GM10248 (cell line): ENCODE measurements at regions of chr3 and their contacts with region 1.

Region 1: GRCh38 chr3:99833617-99834205 is 16.0 kb downstream of the CMSS1 start:
- DNase-seq: no peak
- CTCF ChIP-seq: no peak

Region 2: DNA sequence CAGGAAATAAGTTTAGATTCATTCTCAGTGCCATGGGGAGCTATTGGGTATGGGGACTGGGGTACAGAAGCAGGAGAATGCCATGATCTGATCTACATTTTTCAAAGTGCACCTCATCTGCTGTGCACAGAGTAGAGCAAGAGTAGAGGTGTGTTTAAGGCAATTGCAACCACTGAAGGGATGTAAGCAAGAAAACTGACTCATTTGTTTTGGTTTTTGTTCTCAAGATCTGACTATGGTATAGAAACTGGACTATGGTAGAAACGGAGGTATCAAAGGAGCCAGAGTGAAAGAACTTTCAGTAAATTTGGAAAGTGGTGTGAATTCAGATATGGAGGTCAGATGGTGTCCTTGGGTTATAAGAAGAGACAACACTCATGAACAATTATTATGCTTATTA is 102.2 kb before region 1 on chr3:
- CTCF ChIA-PET with region 1: no interaction called
- POLR2A ChIA-PET with region 1: no interaction called
- DNase-seq: no peak
- CTCF ChIP-seq: no peak

Region 3: DNA sequence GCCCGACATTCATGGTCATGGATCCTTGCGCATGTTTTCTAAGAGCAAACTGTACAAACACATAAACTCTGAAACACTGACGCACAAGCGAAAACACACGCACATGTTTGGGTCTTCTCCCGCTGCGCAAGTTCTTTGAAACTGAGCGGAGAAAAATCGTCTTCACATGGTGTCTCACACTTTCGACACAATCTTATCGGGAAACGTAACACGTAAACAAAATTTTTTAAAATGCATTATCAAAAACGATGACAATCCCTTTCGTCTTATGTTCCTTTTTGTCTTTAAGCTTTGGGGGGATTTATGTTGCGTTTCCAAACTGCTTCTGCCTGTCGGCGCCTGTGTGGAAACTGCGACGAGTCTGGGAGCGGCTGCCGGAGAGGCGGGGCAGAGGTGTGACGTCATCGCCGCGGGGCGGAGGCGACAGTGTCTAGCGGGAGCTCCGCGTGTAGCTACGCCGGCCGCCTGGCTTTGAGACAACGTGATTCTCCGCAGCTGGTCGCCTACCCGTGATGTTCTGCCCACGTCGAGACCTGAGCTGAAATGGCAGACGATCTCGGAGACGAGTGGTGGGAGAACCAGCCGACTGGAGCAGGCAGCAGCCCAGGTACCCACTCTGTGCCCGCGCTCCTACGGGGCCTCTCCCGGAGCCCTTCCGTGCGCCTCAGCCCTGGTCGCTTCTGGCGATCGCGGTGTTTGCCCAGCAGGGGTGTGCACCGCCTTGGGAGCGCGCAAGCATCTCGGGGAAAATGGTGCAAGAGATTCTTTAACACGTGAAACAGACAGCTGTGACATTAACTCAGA is 16.1 kb before region 1 on chr3 and contains the start of gene CMSS1:
- CTCF ChIA-PET with region 1: interaction called, 76 read pairs
- POLR2A ChIA-PET with region 1: interaction called, 5 read pairs
- DNase-seq: peak; percentile 92
- CTCF ChIP-seq: no peak